Activated CD4-positive, alpha-beta memory T cell treated with anti-CD3 and anti-CD28 coated beads for 36 hours (primary cell): ENCODE measurements at regions of chr17 and their contacts with region 1.

Region 1: GRCh38 chr17:21043286-21044232 is 748 bp upstream of the USP22 start:
- DNase-seq: peak; percentile 98
- H3K4me3 Mint-ChIP-seq: peak overlapping the region; percentile 78
- H3K27ac Mint-ChIP-seq: peak overlapping the region; percentile 90
- H3K4me1 Mint-ChIP-seq: peaks cover 24% of the 10 kb centered on the region
- H3K27me3 Mint-ChIP-seq: no peaks in the 10 kb centered on the region

Region 2: DNA sequence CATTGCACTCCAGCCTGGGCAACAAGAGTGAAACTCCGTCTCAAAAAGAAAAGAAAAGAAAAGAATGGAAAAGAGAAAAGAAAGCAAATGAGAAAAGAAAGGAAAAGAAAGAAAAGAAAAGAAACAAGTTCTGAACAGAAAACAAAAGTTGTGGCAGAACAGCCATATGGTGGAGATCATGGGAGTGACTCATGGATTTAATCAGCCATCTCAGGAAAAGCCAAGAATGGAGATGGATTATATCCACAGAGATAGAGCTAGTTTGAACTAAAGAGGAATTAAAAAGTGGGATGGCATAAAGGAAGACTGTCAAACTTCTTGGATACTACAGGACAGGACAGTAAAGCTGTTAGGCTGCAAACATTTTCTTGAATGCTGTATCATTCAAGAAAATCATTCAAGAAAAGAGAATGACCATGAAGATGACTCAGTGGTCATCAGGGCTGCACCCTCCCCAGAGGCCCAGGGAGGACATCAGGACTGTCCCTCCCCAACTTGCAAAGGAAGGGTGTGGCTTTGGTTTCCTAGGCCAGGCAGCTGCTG is 121.4 kb before region 1 on chr17:
- CTCF ChIA-PET with region 1: no interaction called
- POLR2A ChIA-PET with region 1: no interaction called
- intact Hi-C with region 1: no loop called
- DNase-seq: no peak
- H3K4me3 Mint-ChIP-seq: no peak overlapping the region
- H3K27ac Mint-ChIP-seq: no peak overlapping the region
- H3K4me1 Mint-ChIP-seq: no peaks in the 10 kb centered on the region
- H3K27me3 Mint-ChIP-seq: peaks cover 12% of the 10 kb centered on the region

Region 3: GRCh38 chr17:20992987-20993862 is 50.3 kb before region 1 on chr17:
- CTCF ChIA-PET with region 1: interaction called, 6 read pairs
- POLR2A ChIA-PET with region 1: interaction called, 3 read pairs
- intact Hi-C with region 1: loop called (anchors 5 kb)
- DNase-seq: peak; percentile 78
- H3K4me3 Mint-ChIP-seq: no peak overlapping the region
- H3K27ac Mint-ChIP-seq: no peak overlapping the region
- H3K4me1 Mint-ChIP-seq: no peaks in the 10 kb centered on the region
- H3K27me3 Mint-ChIP-seq: no peaks in the 10 kb centered on the region

Region 4: GRCh38 chr17:21029032-21029431 is 14.5 kb before region 1 on chr17:
- CTCF ChIA-PET with region 1: interaction called, 21 read pairs
- POLR2A ChIA-PET with region 1: interaction called, 12 read pairs
- intact Hi-C with region 1: loop called (anchors 1 kb)
- DNase-seq: peak; percentile 70
- H3K4me3 Mint-ChIP-seq: no peak overlapping the region
- H3K27ac Mint-ChIP-seq: peak overlapping the region; percentile 78
- H3K4me1 Mint-ChIP-seq: peaks cover 67% of the 10 kb centered on the region
- H3K27me3 Mint-ChIP-seq: no peaks in the 10 kb centered on the region

Region 5: GRCh38 chr17:21126645-21127510 is 83.3 kb after region 1 on chr17 and contains the start of gene DHRS7B:
- CTCF ChIA-PET with region 1: interaction called, 3 read pairs
- POLR2A ChIA-PET with region 1: no interaction called
- intact Hi-C with region 1: loop called (anchors 1 kb)
- DNase-seq: peak; percentile 98
- H3K4me3 Mint-ChIP-seq: peak within 1 kb of the TSS; percentile 90
- H3K27ac Mint-ChIP-seq: peak within 1 kb of the TSS; percentile 88
- H3K4me1 Mint-ChIP-seq: peaks cover 31% of the 10 kb centered on the region
- H3K27me3 Mint-ChIP-seq: peaks cover 1% of the 10 kb centered on the region
- total RNA-seq, gene DHRS7B: 13.5 to 15.9 TPM

Region 6: DNA sequence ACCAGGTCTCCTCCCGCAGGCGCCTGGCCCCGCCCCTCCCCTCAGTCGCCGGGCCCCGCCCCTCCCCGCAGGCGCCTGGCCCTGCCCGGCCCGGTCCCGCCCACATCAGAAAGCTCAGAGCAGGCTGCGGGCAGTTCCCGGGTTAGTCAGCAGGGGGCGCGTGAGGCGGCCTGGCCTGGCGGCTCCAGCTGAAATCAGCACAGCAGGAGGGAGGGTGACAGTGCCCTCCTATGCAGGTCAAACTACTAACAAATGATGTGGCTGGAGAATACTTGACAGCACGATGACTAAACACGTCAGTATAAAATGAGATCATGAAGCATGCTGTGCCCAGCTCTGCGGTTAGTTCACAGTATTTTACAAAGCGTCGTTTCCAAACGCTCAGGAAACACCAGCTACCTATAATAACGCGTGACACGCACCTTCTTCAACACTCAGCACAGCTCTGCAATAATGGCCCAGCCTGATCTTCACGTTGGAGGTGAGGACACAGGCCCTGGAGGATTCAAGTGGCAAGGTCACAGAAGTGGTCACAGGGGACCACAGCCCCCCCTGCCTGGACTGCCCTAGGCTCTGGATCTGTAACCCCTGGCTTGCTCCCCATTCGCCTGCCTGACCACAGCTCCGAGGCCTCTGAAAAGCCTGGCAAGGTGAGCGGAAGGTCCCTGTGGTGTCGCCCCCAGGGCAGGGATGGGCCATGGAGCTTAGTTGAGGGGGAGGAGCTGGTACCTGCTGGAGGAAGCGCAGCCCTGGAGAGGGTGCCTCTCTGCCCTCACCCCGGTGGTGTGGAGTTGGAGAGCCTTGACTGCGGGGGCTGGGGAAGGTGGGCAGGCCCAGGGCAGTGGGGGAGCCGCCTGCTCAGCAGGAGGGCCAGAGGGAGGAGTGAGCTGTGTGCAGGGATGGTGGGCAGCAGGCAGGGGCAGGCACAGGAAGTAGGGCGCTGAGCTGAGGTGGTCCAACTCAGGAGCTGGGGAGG is 413.8 kb after region 1 on chr17:
- CTCF ChIA-PET with region 1: interaction called, 6 read pairs
- POLR2A ChIA-PET with region 1: no interaction called
- intact Hi-C with region 1: loop called (anchors 5 kb)
- DNase-seq: peak; percentile 97
- H3K4me3 Mint-ChIP-seq: no peak overlapping the region
- H3K27ac Mint-ChIP-seq: peak overlapping the region; percentile 53
- H3K4me1 Mint-ChIP-seq: peaks cover 14% of the 10 kb centered on the region
- H3K27me3 Mint-ChIP-seq: peaks cover 6% of the 10 kb centered on the region